ENCODE measurements at regions of chr12 and their contacts with region 1.

Region 1: DNA sequence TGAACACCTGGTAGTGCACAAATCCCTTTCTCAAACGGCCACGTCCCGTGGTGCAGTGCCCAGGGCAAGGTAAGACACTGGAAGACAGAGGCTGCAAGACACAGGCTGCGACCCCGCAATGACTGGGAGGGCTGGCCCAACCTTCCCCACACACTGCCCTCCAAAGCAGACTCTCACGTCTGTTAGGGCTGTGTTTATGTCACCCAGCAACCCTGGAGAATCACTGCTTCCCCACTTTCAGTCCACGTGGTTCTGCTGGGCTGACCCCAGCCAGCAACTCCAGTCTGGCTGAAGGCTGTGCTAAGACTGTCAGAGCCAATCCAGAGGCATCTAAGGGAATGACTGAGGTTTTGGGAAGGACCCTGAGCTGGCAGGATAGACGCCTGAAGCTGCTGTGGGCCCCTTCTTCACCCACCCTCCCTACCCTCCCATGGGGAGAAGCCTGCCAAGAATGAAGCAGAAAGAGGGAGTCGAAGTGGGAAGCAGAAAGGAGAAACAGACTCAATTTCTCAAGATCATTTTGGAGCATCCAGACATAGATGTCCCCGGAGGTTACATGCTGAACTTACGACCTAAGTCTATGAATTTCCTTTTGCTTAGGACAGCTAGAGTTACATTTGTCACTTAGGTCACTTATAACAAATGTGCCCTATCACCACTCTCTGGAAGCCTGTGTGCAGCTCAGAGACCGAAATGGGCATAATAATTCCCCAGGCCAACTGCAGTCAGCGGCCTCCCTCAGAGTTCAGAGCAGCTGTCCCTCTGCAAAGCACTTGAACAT is 11.7 kb downstream of the KDM2B start:
- ATAC-seq: peak; percentile 82 to 95 (median 90)
- H3K4me3 ChIP-seq: no peak overlapping the region
- H3K27ac ChIP-seq: peak overlapping the region in 1 of 2 donors; percentile 50
- H3K4me1 ChIP-seq: peaks cover 11 to 13% of the 10 kb centered on the region in 2 donors

Region 2: GRCh38 chr12:121399391-121400331 is 169.5 kb before region 1 on chr12 and contains the start of gene RNF34:
- in situ Hi-C with region 1: no loop called
- ATAC-seq: peak; percentile 90 to 97 (median 96)
- H3K4me3 ChIP-seq: peak within 1 kb of the TSS; percentile 71 to 90 (median 73)
- H3K27ac ChIP-seq: peak within 1 kb of the TSS; percentile 60 to 77
- H3K4me1 ChIP-seq: peaks cover 9 to 17% of the 10 kb centered on the region in 2 donors
- total RNA-seq, gene RNF34: 28.0 to 54.8 (median 37.2) TPM

Region 3: GRCh38 chr12:121668750-121669520 is 99.8 kb after region 1 on chr12:
- in situ Hi-C with region 1: loop called in 1 of 9 experiments (anchors 25 kb)
- ATAC-seq: peak in 5 of 8 experiments; percentile 14 to 33 (median 21)
- H3K4me3 ChIP-seq: no peak overlapping the region
- H3K27ac ChIP-seq: no peak overlapping the region
- H3K4me1 ChIP-seq: peaks cover 2 to 10% of the 10 kb centered on the region in 2 donors